Right ventricle myocardium inferior (tissue), 1 donor: ENCODE measurements at regions of chr19 and their contacts with region 1.

Region 1: GRCh38 chr19:5827891-5828660 is 11.4 kb downstream of the FUT6 start:
- DNase-seq: peak; percentile 95
- ATAC-seq: peak; percentile 78

Region 2: DNA sequence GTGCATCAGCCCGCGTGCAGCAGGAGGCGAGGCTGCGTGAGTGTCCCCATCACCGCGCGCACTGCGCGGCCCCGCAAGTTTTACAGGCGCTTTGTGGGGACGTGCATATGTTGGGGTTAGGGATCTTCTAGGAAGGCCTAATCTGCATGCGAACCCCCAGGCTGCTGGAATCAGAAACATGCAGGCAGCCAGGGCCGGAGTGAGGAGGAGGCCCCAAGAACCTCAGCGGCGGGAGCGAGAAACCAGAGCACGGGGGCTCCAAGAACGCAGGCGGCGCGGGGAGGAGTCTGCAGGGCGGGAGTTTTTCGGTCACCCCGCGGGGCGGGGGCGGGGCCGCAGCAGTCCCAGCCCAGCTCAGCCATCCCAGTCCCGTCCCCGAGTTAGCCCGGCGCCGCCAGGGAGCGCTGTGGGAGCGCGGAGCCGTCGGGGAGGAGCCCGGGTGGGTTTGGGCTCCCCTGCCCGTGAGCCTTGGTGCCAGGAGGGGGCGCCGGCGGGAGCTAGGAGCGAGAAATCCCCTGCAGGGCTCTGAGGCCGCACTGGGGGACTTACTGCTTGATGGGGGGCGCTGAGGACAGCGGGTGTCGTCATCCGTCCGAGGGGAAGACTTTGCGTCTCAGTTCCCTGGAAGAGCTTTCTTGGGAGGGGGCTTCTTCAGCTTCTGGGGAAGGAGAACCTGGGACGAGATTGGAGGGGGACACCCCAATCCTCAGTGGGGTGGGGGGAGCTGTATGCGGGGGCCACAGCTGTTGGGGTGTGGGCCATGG is 24.1 kb before region 1 on chr19:
- intact Hi-C with region 1: loop called (anchors 2 kb)
- DNase-seq: peak; percentile 92
- ATAC-seq: peak; percentile 87

Region 3: GRCh38 chr19:5814852-5815246 is 13.2 kb before region 1 on chr19:
- intact Hi-C with region 1: no loop called
- DNase-seq: no peak
- ATAC-seq: no peak

Region 4: GRCh38 chr19:5891938-5892771 is 64.1 kb after region 1 on chr19:
- intact Hi-C with region 1: loop called (anchors 2 kb)
- DNase-seq: no peak
- ATAC-seq: peak; percentile 61

Region 5: DNA sequence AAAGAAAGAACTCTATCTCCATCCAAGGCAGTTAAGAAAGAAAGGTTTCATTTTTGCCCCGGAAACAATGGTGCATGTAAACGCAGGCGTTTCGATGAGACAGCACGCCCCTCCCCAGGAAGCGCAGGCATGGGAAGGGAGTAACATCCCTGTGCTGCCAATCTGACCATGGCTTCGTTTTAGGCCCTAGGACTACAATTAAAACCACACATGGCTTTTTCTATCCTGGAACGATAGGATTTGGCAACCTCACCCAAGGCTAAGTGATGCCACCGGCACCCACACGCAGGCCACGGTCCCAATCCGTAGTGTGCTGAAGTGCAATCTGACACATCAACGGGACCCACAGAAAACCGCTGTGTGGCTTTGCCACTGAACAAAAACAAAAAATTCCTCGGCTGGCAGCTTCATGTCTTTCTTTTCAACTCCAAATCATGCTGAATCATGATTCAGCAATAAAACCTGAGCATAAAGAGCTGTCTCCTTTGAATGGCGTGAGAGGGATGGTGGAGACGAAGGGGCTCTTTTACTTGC is 125.7 kb after region 1 on chr19:
- intact Hi-C with region 1: loop called (anchors 10 kb)
- DNase-seq: no peak
- ATAC-seq: no peak